Naive thymus-derived CD4-positive, alpha-beta T cell (primary cell): ENCODE measurements at regions of chr12 and their contacts with region 1.

Region 1: DNA sequence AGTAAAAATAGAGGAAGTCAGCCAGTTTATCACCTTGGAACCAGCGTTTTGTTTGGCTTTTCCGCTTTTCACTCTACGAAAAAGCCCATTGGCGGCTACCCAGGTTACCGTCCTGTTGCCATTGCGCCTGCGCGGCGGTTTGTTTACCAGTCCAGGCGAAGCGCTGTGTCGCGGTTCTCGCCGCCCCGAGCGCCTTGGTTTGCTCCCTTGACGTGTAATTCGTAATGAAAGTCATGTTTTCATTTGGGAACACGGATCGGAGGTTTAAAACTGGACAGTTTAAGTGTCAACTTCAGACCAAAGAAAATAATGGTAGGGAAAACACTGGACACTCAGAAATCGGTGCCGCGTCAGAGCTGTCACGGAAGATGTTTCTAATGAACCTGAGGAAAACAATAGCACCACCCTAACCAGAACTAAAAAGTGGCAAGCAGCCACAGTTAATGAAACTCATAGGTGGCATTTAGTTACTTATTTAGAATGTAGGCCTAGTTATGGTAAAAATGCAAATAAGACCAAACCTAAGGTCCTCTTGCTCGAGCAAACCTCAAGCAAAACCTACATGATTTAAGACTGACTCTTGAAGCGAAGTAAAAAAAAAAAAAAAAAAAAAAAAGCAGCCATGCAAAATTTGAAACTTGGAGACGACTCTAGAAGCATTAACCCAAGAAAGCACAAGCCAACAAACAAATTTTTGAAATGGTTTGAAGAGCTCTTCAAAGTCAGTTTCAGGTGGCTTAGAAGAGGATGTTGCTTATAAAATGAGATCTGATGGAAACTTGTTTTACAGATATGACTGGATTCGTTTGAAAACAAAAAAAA is 790 bp upstream of the GPR19 start:
- DNase-seq: peak; percentile 86 to 97 (median 92)
- ATAC-seq: peak; percentile 92
- H3K4me3 ChIP-seq: peak overlapping the region; percentile 63
- H3K4me3 Mint-ChIP-seq: peak overlapping the region; percentile 79 to 99 (median 95)
- H3K27ac ChIP-seq: peak overlapping the region; percentile 93
- H3K27ac Mint-ChIP-seq: peak overlapping the region; percentile 95 to 100 (median 100)
- H3K4me1 ChIP-seq: peaks cover 11 to 16% of the 10 kb centered on the region in 2 donors
- H3K4me1 Mint-ChIP-seq: peaks cover 24 to 63% (median 33%) of the 10 kb centered on the region in 7 donors
- H3K27me3 ChIP-seq: no peaks in the 10 kb centered on the region
- H3K27me3 Mint-ChIP-seq: no peaks in the 10 kb centered on the region

Region 2: DNA sequence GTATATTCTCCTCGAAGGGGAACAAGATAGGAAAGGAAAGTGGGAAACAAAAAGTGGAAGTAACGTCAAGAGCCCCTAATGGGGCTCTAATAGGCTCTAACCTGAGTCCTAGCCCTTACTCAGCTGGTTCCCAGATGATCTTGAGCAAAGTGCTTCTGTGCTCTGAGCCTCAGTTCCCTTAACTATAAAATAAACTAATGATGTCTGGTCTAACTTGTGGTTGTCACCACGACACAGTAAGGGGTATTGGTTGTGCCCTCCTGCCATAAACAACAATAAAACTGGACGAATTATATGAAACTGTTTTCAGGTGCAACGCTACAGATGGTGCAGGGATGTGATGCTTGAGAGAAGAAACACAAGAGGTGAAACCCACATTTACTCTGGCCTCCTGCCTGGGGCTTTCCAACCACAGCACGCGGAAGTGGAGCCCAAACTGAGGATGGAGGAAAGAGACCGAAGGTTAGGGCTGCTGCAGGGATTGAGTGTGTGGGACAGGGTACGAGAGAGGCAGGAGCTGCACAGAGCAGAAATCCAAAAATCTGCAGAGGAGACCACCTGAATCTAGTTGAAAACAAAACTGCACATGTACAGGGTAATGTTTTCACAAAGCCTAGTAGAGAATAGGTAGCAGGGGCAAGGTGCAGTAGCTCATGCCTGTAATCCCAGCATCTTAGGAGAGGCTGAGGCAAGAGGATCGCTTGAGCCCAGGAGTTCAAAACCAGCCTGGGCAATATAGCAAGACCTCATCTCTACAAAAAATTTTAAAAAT is 671.7 kb before region 1 on chr12:
- CTCF ChIA-PET with region 1: no interaction called
- POLR2A ChIA-PET with region 1: no interaction called
- intact Hi-C with region 1: no loop called
- DNase-seq: peak in 6 of 9 donors; percentile 24 to 51 (median 31)
- ATAC-seq: peak; percentile 88
- H3K4me3 ChIP-seq: no peak overlapping the region
- H3K4me3 Mint-ChIP-seq: peak overlapping the region in 9 of 10 donors; percentile 11 to 72 (median 48)
- H3K27ac ChIP-seq: no peak overlapping the region
- H3K27ac Mint-ChIP-seq: peak overlapping the region; percentile 22 to 90 (median 66)
- H3K4me1 ChIP-seq: peaks cover 10 to 17% of the 10 kb centered on the region in 2 donors
- H3K4me1 Mint-ChIP-seq: peaks cover 28 to 55% (median 32%) of the 10 kb centered on the region in 7 donors
- H3K27me3 ChIP-seq: no peaks in the 10 kb centered on the region
- H3K27me3 Mint-ChIP-seq: no peaks in the 10 kb centered on the region

Region 3: GRCh38 chr12:12266873-12267741 is 429.7 kb before region 1 on chr12 and contains the start of gene LRP6:
- CTCF ChIA-PET with region 1: no interaction called
- POLR2A ChIA-PET with region 1: no interaction called
- intact Hi-C with region 1: loop called in 1 of 2 experiments (anchors 5 kb)
- DNase-seq: peak; percentile 57 to 83 (median 75)
- ATAC-seq: peak; percentile 91
- H3K4me3 ChIP-seq: peak within 1 kb of the TSS; percentile 86
- H3K4me3 Mint-ChIP-seq: peak within 1 kb of the TSS; percentile 79 to 93 (median 88)
- H3K27ac ChIP-seq: peak within 1 kb of the TSS; percentile 68
- H3K27ac Mint-ChIP-seq: peak within 1 kb of the TSS; percentile 29 to 88 (median 73)
- H3K4me1 ChIP-seq: peaks cover 8 to 10% of the 10 kb centered on the region in 2 donors
- H3K4me1 Mint-ChIP-seq: peaks cover 14 to 40% (median 31%) of the 10 kb centered on the region in 7 donors
- H3K27me3 ChIP-seq: peaks cover 0 to 10% of the 10 kb centered on the region in 2 donors
- H3K27me3 Mint-ChIP-seq: peaks cover 0 to 53% (median 14%) of the 10 kb centered on the region in 5 donors
- total RNA-seq, gene LRP6: 1.6 to 12.6 (median 7.4) TPM

Region 4: GRCh38 chr12:12474931-12475795 is 221.6 kb before region 1 on chr12:
- CTCF ChIA-PET with region 1: interaction called, 3 read pairs
- POLR2A ChIA-PET with region 1: interaction called, 3 read pairs
- intact Hi-C with region 1: loop called in 1 of 2 experiments (anchors 2 kb)
- DNase-seq: peak in 3 of 9 donors; percentile 22 to 49 (median 37)
- ATAC-seq: peak; percentile 84
- H3K4me3 ChIP-seq: peak overlapping the region; percentile 7
- H3K4me3 Mint-ChIP-seq: peak overlapping the region in 9 of 10 donors; percentile 11 to 76 (median 43)
- H3K27ac ChIP-seq: peak overlapping the region; percentile 39
- H3K27ac Mint-ChIP-seq: peak overlapping the region; percentile 72 to 95 (median 91)
- H3K4me1 ChIP-seq: peaks cover 7 to 17% of the 10 kb centered on the region in 2 donors
- H3K4me1 Mint-ChIP-seq: peaks cover 10 to 72% (median 42%) of the 10 kb centered on the region in 7 donors
- H3K27me3 ChIP-seq: no peaks in the 10 kb centered on the region
- H3K27me3 Mint-ChIP-seq: no peaks in the 10 kb centered on the region

Region 5: DNA sequence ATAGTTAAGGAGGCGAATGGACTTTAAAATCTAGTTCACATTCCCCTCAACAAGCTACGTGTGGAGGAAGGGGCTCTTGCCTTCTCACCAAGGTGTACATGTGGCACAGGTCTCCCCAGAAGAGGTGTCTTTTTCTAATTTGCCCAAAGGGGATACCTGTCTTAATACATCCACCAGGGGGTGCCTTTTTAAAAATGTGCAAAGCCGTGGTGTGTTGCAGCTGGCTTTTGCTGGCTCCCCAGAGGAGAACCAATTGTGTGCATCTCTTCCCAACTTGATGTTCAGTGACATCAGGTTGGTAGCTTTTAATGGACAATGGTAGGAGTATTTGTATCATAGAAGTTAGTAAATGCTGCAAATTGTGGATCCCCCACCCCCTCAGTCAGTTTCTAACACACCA is 51.3 kb before region 1 on chr12:
- CTCF ChIA-PET with region 1: interaction called, 3 read pairs
- POLR2A ChIA-PET with region 1: interaction called, 5 read pairs
- intact Hi-C with region 1: loop called in 1 of 2 experiments (anchors 5 kb)
- DNase-seq: peak in 8 of 9 donors; percentile 24 to 76 (median 62)
- ATAC-seq: peak; percentile 80
- H3K4me3 ChIP-seq: no peak overlapping the region
- H3K4me3 Mint-ChIP-seq: no peak overlapping the region
- H3K27ac ChIP-seq: no peak overlapping the region
- H3K27ac Mint-ChIP-seq: peak overlapping the region in 3 of 9 donors; percentile 42 to 79 (median 67)
- H3K4me1 ChIP-seq: no peaks in the 10 kb centered on the region
- H3K4me1 Mint-ChIP-seq: peaks cover 0 to 11% (median 3%) of the 10 kb centered on the region in 7 donors
- H3K27me3 ChIP-seq: no peaks in the 10 kb centered on the region
- H3K27me3 Mint-ChIP-seq: no peaks in the 10 kb centered on the region

Region 6: DNA sequence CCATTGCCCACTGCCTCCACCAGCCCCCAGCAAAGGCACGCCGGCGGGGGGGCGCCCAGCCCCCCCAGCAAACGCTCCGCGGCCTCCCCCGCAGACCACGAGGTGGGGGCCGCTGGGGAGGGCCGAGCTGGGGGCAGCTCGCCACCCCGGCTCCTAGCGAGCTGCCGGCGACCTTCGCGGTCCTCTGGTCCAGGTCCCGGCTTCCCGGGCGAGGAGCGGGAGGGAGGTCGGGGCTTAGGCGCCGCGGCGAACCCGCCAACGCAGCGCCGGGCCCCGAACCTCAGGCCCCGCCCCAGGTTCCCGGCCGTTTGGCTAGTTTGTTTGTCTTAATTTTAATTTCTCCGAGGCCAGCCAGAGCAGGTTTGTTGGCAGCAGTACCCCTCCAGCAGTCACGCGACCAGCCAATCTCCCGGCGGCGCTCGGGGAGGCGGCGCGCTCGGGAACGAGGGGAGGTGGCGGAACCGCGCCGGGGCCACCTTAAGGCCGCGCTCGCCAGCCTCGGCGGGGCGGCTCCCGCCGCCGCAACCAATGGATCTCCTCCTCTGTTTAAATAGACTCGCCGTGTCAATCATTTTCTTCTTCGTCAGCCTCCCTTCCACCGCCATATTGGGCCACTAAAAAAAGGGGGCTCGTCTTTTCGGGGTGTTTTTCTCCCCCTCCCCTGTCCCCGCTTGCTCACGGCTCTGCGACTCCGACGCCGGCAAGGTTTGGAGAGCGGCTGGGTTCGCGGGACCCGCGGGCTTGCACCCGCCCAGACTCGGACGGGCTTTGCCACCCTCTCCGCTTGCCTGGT is 20.2 kb after region 1 on chr12 and contains the start of gene CDKN1B:
- CTCF ChIA-PET with region 1: interaction called, 29 read pairs
- POLR2A ChIA-PET with region 1: interaction called, 1,179 read pairs
- intact Hi-C with region 1: loop called (anchors 1 kb)
- DNase-seq: peak; percentile 68 to 91 (median 87)
- ATAC-seq: peak; percentile 77
- H3K4me3 ChIP-seq: peak within 1 kb of the TSS; percentile 94
- H3K4me3 Mint-ChIP-seq: peak within 1 kb of the TSS; percentile 87 to 100 (median 98)
- H3K27ac ChIP-seq: peak within 1 kb of the TSS; percentile 99
- H3K27ac Mint-ChIP-seq: peak within 1 kb of the TSS; percentile 97 to 99 (median 99)
- H3K4me1 ChIP-seq: peaks cover 24 to 39% of the 10 kb centered on the region in 2 donors
- H3K4me1 Mint-ChIP-seq: peaks cover 43 to 66% (median 55%) of the 10 kb centered on the region in 7 donors
- H3K27me3 ChIP-seq: no peaks in the 10 kb centered on the region
- H3K27me3 Mint-ChIP-seq: no peaks in the 10 kb centered on the region
- total RNA-seq, gene CDKN1B: 105 to 205 (median 191) TPM

Region 7: DNA sequence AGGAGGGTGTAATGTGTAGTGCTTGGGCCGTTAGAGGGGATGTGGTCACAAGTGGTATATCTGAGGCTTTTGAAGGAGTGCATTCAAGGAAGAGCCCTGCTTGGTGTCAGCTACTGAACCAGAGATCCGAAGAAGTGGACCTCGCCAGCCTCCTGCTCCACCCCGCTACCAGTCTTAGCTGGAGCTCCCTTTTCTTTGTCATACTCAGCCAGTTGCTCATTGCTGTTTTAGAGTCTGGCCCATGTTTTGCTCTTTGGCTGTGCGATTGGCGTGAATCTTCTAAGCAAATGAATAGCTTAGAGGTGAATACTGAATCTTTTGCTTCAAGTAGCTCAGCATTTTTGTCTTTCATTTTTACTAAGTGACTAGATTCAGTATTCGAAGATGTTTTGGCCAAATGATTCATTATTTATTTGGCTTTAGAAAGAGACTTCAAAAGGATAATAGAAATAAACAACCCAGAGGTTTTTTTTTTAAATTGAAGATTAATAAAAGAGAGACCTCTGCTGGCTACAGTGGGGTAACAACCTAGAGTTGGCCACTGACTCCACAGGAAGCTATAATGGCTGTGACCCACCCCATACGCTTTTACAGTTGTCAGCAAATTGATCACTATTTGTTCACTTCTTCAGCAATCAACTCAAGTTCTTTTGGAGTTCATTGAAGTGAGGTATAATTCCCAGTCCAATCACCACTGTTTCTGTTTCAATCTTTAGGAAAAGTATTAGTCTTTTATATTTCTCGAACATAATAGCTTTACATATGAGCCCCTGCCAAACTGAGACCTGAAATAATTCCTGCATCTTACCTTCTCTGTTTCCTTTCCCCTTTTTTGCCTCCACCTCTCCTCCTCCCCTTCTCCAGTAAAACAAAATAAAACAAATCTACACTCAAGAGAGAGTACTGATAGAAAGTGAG is 40.2 kb after region 1 on chr12:
- CTCF ChIA-PET with region 1: interaction called, 18 read pairs
- POLR2A ChIA-PET with region 1: interaction called, 19 read pairs
- intact Hi-C with region 1: loop called in 1 of 2 experiments (anchors 5 kb)
- DNase-seq: peak in 7 of 9 donors; percentile 32 to 59 (median 39)
- ATAC-seq: peak; percentile 93
- H3K4me3 ChIP-seq: peak overlapping the region; percentile 28
- H3K4me3 Mint-ChIP-seq: peak overlapping the region; percentile 53 to 82 (median 68)
- H3K27ac ChIP-seq: peak overlapping the region; percentile 54
- H3K27ac Mint-ChIP-seq: peak overlapping the region; percentile 75 to 93 (median 85)
- H3K4me1 ChIP-seq: peaks cover 9 to 33% of the 10 kb centered on the region in 2 donors
- H3K4me1 Mint-ChIP-seq: peaks cover 21 to 65% (median 35%) of the 10 kb centered on the region in 7 donors
- H3K27me3 ChIP-seq: no peaks in the 10 kb centered on the region
- H3K27me3 Mint-ChIP-seq: no peaks in the 10 kb centered on the region